ENCODE measurements at regions of chr15 and their contacts with region 1.

Region 1: GRCh38 chr15:100338971-100339444 is 2.8 kb downstream of the ADAMTS17 start:
- DNase-seq: peak; percentile 91
- H3K4me3 ChIP-seq: no peak overlapping the region
- H3K27ac ChIP-seq: no peak overlapping the region
- H3K4me1 ChIP-seq: peaks cover 4 to 43% (median 38%) of the 10 kb centered on the region in 4 donors
- H3K27me3 ChIP-seq: peaks cover 0 to 6% (median 0%) of the 10 kb centered on the region in 4 donors
- CTCF ChIP-seq: peak; percentile 75 to 89 (median 87)
- EP300 ChIP-seq: no peak
- POLR2A ChIP-seq: no peak

Region 2: DNA sequence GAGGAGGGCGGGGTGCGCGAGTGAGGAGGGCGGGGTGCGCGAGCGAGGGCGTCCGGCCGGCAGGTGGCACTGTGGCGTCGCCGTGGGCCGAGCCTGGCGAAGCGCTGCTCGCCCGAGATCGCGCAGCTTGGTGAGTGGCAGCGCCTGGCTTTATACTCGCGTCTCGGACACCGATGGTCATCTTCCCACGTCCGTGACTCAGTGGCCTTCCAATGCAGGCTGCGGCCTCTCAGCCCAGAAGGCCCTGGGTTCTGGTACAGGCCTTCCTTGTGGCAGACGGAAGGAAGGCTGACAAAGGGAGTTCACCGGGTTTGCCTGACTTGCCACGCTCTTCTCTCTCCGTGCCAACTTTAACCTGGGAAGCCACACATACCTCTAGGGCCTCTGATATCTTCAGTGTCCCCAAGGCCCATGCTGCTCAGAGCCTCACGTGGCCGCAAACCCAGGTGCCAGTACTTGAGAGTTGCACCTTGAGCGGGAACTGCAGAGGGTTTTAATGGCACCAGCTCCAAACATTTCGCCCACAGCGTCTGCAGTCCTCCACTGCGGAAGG is 410.5 kb before region 1 on chr15:
- intact Hi-C with region 1: loop called (anchors 2 kb)
- DNase-seq: peak; percentile 92
- H3K4me3 ChIP-seq: peak overlapping the region; percentile 44 to 58 (median 51)
- H3K27ac ChIP-seq: peak overlapping the region; percentile 74 to 80 (median 76)
- H3K4me1 ChIP-seq: peaks cover 6 to 19% (median 12%) of the 10 kb centered on the region in 4 donors
- H3K27me3 ChIP-seq: no peaks in the 10 kb centered on the region
- CTCF ChIP-seq: peak; percentile 66 to 69 (median 67)
- EP300 ChIP-seq: no peak
- POLR2A ChIP-seq: no peak

Region 3: GRCh38 chr15:100114100-100114499 is 224.9 kb before region 1 on chr15:
- intact Hi-C with region 1: no loop called
- DNase-seq: no peak
- H3K4me3 ChIP-seq: peak overlapping the region; percentile 8 to 38 (median 32)
- H3K27ac ChIP-seq: peak overlapping the region; percentile 65 to 81 (median 74)
- H3K4me1 ChIP-seq: peaks cover 55 to 64% (median 60%) of the 10 kb centered on the region in 4 donors
- H3K27me3 ChIP-seq: no peaks in the 10 kb centered on the region
- CTCF ChIP-seq: no peak
- EP300 ChIP-seq: no peak
- POLR2A ChIP-seq: no peak

Region 4: GRCh38 chr15:100201376-100202280 is 137.4 kb before region 1 on chr15:
- intact Hi-C with region 1: loop called (anchors 10 kb)
- DNase-seq: no peak
- H3K4me3 ChIP-seq: no peak overlapping the region
- H3K27ac ChIP-seq: no peak overlapping the region
- H3K4me1 ChIP-seq: peaks cover 4 to 18% (median 6%) of the 10 kb centered on the region in 4 donors
- H3K27me3 ChIP-seq: no peaks in the 10 kb centered on the region
- CTCF ChIP-seq: no peak
- EP300 ChIP-seq: no peak
- POLR2A ChIP-seq: no peak

Region 5: DNA sequence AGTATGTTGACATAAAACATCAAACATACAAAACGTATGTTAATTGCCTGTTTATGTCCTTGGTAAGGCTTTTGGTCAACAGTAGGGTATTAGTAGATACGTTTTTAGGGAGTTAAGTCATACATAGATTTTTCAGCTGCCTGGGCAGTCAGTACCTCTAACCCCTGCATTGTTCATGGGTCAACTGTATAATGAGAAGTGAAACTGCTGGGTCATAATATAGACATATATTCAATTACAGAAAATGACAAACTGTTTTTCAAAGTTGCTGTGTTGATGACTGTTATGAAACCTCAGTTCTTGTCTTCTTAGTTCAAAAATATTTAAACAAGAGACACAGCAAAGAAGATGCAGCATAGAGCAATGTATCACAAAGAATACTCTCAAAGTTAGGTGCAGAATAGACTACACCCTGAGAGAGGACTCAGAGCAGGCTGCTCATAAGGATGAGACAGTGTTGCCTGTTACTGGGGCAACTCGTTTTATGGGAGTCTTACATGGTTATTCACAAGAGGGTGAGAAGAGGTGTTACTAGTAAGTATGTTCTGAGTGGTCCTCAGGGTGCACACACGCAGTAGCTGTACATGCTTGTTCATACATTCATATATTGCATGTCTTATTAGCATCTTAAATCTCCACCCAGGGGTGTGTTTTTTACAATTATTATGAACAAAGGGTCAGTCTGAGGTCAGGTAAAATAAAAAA is 55.9 kb after region 1 on chr15:
- intact Hi-C with region 1: no loop called
- DNase-seq: no peak
- H3K4me3 ChIP-seq: no peak overlapping the region
- H3K27ac ChIP-seq: no peak overlapping the region
- H3K4me1 ChIP-seq: peaks cover 0 to 4% (median 0%) of the 10 kb centered on the region in 4 donors
- H3K27me3 ChIP-seq: no peaks in the 10 kb centered on the region
- CTCF ChIP-seq: no peak
- EP300 ChIP-seq: no peak
- POLR2A ChIP-seq: no peak

Measured in esophagus muscularis mucosa (tissue), 4 donors.